Heart left ventricle (tissue), 16 donors: ENCODE measurements at regions of chr9 and their contacts with region 1.

Region 1: GRCh38 chr9:19174127-19174912 is 47.0 kb upstream of the PLIN2 start:
- DNase-seq: peak; percentile 34 to 84 (median 79)
- ATAC-seq: peak; percentile 82 to 96 (median 88)
- H3K4me3 ChIP-seq: no peak overlapping the region
- H3K27ac ChIP-seq: peak overlapping the region in 1 of 12 donors; percentile 13
- H3K4me1 ChIP-seq: peaks cover 0 to 28% (median 0%) of the 10 kb centered on the region in 12 donors
- H3K27me3 ChIP-seq: no peaks in the 10 kb centered on the region
- CTCF ChIP-seq: peak; percentile 35 to 77 (median 67)
- POLR2A ChIP-seq: no peak

Region 2: GRCh38 chr9:19048966-19049916 is 125.1 kb before region 1 on chr9 and contains the start of gene RRAGA:
- intact Hi-C with region 1: loop called in 6 of 10 experiments (anchors 1 to 10 kb)
- DNase-seq: peak; percentile 94 to 97 (median 94)
- ATAC-seq: peak; percentile 94 to 97 (median 97)
- H3K4me3 ChIP-seq: peak within 1 kb of the TSS; percentile 71 to 98 (median 88)
- H3K27ac ChIP-seq: peak within 1 kb of the TSS; percentile 84 to 99 (median 97)
- H3K4me1 ChIP-seq: peaks cover 0 to 46% (median 30%) of the 10 kb centered on the region in 12 donors
- H3K27me3 ChIP-seq: no peaks in the 10 kb centered on the region
- CTCF ChIP-seq: peak; percentile 74 to 95 (median 87)
- POLR2A ChIP-seq: peak in 1 of 2 donors; percentile 86
- total RNA-seq, gene RRAGA: 60.1 to 93.3 (median 83.6) TPM

Region 3: GRCh38 chr9:19085295-19085694 is 89.0 kb before region 1 on chr9:
- intact Hi-C with region 1: loop called in 2 of 10 experiments (anchors 5 to 10 kb)
- DNase-seq: no peak
- ATAC-seq: no peak
- H3K4me3 ChIP-seq: no peak overlapping the region
- H3K27ac ChIP-seq: no peak overlapping the region
- H3K4me1 ChIP-seq: no peaks in the 10 kb centered on the region
- H3K27me3 ChIP-seq: no peaks in the 10 kb centered on the region
- CTCF ChIP-seq: peak in 9 of 12 donors; percentile 7 to 40 (median 29)
- POLR2A ChIP-seq: no peak

Region 4: GRCh38 chr9:19102631-19103345 is 71.5 kb before region 1 on chr9 and contains the start of gene HAUS6:
- intact Hi-C with region 1: loop called in 2 of 10 experiments (anchors 5 kb)
- DNase-seq: peak; percentile 97 to 98 (median 98)
- ATAC-seq: peak; percentile 100
- H3K4me3 ChIP-seq: peak within 1 kb of the TSS; percentile 56 to 92 (median 77)
- H3K27ac ChIP-seq: peak within 1 kb of the TSS; percentile 61 to 92 (median 88)
- H3K4me1 ChIP-seq: peaks cover 0 to 24% (median 11%) of the 10 kb centered on the region in 12 donors
- H3K27me3 ChIP-seq: no peaks in the 10 kb centered on the region
- CTCF ChIP-seq: peak; percentile 34 to 65 (median 47)
- POLR2A ChIP-seq: peak in 1 of 2 donors; percentile 64
- total RNA-seq, gene HAUS6: 4.6 to 8.8 (median 7.3) TPM

Region 5: GRCh38 chr9:19120846-19121556 is 53.3 kb before region 1 on chr9:
- intact Hi-C with region 1: loop called in 9 of 10 experiments (anchors 2 to 10 kb)
- DNase-seq: no peak
- ATAC-seq: no peak
- H3K4me3 ChIP-seq: no peak overlapping the region
- H3K27ac ChIP-seq: peak overlapping the region in 1 of 12 donors; percentile 17
- H3K4me1 ChIP-seq: peaks cover 0 to 77% (median 20%) of the 10 kb centered on the region in 12 donors
- H3K27me3 ChIP-seq: no peaks in the 10 kb centered on the region
- CTCF ChIP-seq: no peak
- POLR2A ChIP-seq: no peak

Region 6: DNA sequence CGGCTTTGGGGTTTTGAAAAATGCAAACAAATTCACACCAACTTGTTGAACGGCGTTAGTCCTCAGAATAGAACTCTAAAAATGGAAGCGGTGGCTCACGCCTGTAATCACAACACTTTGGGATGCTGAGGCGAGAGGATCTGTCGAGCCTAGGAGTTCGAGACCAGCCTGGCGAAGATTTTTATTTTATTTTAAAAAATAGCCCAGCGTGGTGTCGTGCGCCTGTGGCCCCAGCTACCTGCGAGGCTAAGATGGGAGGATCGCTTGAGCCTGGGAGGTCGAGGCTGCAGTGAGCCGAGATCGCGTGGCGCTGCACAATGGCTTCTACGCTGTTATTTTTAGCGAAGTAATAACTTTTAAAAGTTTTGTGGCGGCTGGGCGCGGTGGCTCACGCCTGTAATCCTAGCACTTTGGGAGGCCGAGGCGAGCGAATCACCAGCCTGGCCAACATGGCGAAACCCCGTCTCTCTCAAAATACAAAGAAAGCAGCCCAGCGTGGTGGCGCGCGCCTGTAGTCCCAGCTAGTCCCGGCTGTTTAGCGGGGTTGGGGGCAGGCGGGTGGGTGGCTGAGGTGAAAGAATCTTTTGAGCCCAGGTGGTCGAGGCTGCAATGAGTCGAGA is 46.3 kb before region 1 on chr9:
- intact Hi-C with region 1: loop called (anchors 2 to 10 kb)
- DNase-seq: peak; percentile 16 to 72 (median 46)
- ATAC-seq: peak; percentile 20 to 43 (median 42)
- H3K4me3 ChIP-seq: peak overlapping the region; percentile 58 to 95 (median 82)
- H3K27ac ChIP-seq: peak overlapping the region; percentile 89 to 100 (median 97)
- H3K4me1 ChIP-seq: peaks cover 4 to 62% (median 26%) of the 10 kb centered on the region in 12 donors
- H3K27me3 ChIP-seq: no peaks in the 10 kb centered on the region
- CTCF ChIP-seq: no peak
- POLR2A ChIP-seq: no peak

Region 7: DNA sequence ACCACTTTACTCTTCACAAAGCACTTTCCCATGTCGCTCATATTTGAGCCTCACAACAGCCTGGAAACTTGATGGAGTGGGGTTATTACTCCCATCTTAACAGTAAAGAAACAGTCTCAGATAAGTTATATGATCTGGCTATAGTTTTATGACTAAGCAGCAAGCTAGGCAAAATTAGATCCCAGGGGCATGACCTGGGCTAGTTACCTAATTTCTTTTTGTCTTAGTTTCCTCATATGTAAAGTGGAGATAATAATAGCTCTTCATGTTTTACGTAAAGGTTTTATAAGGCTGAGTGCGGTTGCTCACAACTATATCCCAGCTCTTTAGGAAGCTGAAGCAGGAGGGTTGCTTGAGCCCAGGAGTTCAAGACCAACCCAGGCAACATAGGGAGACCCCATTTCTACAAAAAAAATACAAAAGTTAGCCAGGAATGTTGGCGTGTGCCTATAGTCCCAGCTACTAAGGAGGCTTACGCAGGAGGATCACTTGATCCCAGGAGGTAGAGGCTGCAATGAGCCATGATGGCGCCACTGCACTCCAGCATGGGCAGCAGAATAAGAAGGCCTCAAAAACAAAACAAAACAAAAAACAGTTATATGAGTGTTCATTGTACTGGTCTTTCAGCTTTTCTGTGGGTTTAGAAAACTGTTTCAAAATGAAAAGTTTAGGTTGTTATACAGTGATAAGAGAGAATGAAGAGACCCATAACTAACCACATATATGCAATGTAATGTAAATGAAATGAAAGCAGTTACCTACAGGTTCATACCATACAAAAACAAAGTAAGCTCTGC is 40.6 kb before region 1 on chr9:
- intact Hi-C with region 1: loop called in 9 of 10 experiments (anchors 5 to 10 kb)
- DNase-seq: no peak
- ATAC-seq: no peak
- H3K4me3 ChIP-seq: no peak overlapping the region
- H3K27ac ChIP-seq: no peak overlapping the region
- H3K4me1 ChIP-seq: peaks cover 0 to 16% (median 8%) of the 10 kb centered on the region in 12 donors
- H3K27me3 ChIP-seq: no peaks in the 10 kb centered on the region
- CTCF ChIP-seq: no peak
- POLR2A ChIP-seq: no peak

Region 8: DNA sequence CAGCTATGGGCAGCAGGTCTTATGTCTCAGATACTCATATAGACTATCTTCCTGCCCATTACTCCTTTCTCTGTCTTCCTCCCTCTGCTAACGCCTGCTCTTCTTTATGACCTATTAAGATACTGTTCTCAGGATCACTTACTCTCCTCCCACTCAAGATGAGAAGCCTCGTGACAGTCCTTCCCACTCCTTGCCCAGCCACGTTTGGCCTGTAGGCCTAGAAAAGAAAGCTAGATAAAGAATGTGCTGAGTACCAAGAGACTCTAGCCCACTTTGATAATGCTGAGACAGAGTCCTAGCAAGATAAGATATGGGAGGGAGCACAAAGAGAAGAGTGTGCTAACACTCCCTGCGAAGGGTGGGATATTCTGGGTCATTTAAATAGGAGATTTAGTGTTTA is 49.4 kb after region 1 on chr9:
- intact Hi-C with region 1: no loop called
- DNase-seq: no peak
- ATAC-seq: peak in 2 of 4 donors; percentile 28 to 45
- H3K4me3 ChIP-seq: no peak overlapping the region
- H3K27ac ChIP-seq: peak overlapping the region in 1 of 12 donors; percentile 5
- H3K4me1 ChIP-seq: peaks cover 0 to 5% (median 0%) of the 10 kb centered on the region in 12 donors
- H3K27me3 ChIP-seq: no peaks in the 10 kb centered on the region
- CTCF ChIP-seq: no peak
- POLR2A ChIP-seq: no peak